ENCODE measurements at regions of chr17 and their contacts with region 1.

Region 1: GRCh38 chr17:8057691-8058114 is 18.8 kb downstream of the ALOX15B start:
- DNase-seq: peak in 2 of 5 donors; percentile 37 to 38
- H3K4me3 ChIP-seq: no peak overlapping the region
- H3K27ac ChIP-seq: no peak overlapping the region
- H3K4me1 ChIP-seq: no peaks in the 10 kb centered on the region
- H3K27me3 ChIP-seq: no peaks in the 10 kb centered on the region
- CTCF ChIP-seq: peak; percentile 25 to 75 (median 66)
- EP300 ChIP-seq: no peak
- POLR2A ChIP-seq: no peak

Region 2: GRCh38 chr17:7873051-7873450 is 184.7 kb before region 1 on chr17:
- intact Hi-C with region 1: loop called in 1 of 4 experiments (anchors 5 kb)
- DNase-seq: no peak
- H3K4me3 ChIP-seq: no peak overlapping the region
- H3K27ac ChIP-seq: no peak overlapping the region
- H3K4me1 ChIP-seq: no peaks in the 10 kb centered on the region
- H3K27me3 ChIP-seq: no peaks in the 10 kb centered on the region
- CTCF ChIP-seq: no peak
- EP300 ChIP-seq: no peak
- POLR2A ChIP-seq: no peak

Measured in ovary (tissue), 10 donors.